H1 (cell line): ENCODE measurements at regions of chr19 and their contacts with region 1.

Region 1: GRCh38 chr19:588093-588740 is 1.5 kb upstream of the HCN2 start:
- DNase-seq: peak; percentile 61 to 90
- H3K4me3 ChIP-seq: peak overlapping the region in 1 of 4 experiments; percentile 29; a peak in 1 of 8 replicates
- H3K27ac ChIP-seq: no peak overlapping the region
- H3K4me1 ChIP-seq: peaks cover 0 to 10% (median 3%) of the 10 kb centered on the region in 4 experiments; a peak in 5 of 7 replicates
- H3K27me3 ChIP-seq: peaks cover 23 to 39% (median 31%) of the 10 kb centered on the region in 4 experiments
- CTCF ChIP-seq: peak; percentile 75 to 88 (median 75)
- EP300 ChIP-seq: no peak
- POLR2A ChIP-seq: no peak
- RAD21 ChIP-seq: peak; percentile 32 to 61

Region 2: DNA sequence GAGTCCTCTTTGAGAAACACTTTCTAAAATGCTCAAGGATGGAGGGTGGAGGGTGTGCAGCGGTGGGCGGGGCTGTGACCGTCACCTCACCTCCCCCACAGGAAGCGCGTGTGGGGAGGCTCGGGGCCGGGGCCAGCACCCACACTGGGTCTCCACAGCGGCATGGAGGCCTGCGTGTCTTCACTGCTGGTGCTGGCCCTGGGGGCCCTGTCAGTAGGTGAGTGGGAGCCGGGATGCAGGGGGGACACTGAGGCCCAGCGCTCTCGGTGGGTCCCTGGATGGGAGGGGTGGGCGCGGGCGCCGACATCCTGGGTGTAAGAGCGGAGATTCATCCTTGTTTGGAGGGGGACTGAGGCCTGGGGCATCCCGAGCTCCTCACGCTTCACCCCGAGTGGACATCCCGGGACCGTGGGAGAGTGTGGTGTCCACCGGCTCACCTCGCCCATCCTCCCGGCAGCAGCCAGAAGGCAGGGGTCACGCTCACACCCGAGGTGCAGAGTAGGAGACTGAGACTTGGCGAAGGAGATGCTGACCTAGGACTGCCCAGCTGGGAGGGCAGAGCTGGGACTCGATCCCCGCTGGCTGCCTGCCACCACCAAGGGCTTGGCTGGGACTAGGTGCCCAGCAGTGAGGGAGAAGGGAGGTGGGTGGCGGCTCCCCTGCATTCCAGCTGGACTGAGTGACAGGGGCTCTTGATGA is 44.2 kb before region 1 on chr19 and contains the start of gene GZMM:
- CTCF ChIA-PET with region 1: interaction called, 4 read pairs
- POLR2A ChIA-PET with region 1: interaction called, 17 read pairs
- DNase-seq: no peak
- H3K4me3 ChIP-seq: no peak within 1 kb of the TSS
- H3K27ac ChIP-seq: no peak within 1 kb of the TSS
- H3K4me1 ChIP-seq: no peaks in the 10 kb centered on the region; a peak in 1 of 7 replicates
- H3K27me3 ChIP-seq: no peaks in the 10 kb centered on the region
- CTCF ChIP-seq: no peak
- EP300 ChIP-seq: no peak
- POLR2A ChIP-seq: 0 out of 3 replicates have a peak, but pooled peaks of 1 of the 2 experiments have one; percentile 15
- RAD21 ChIP-seq: no peak
- total RNA-seq, gene GZMM: 0.32 and 0.59 TPM in 2 replicates

Region 3: GRCh38 chr19:607301-608154 is 19.3 kb after region 1 on chr19:
- CTCF ChIA-PET with region 1: interaction called, 12 read pairs
- POLR2A ChIA-PET with region 1: interaction called, 4 read pairs
- DNase-seq: no peak
- H3K4me3 ChIP-seq: no peak overlapping the region
- H3K27ac ChIP-seq: no peak overlapping the region
- H3K4me1 ChIP-seq: no peaks in the 10 kb centered on the region
- H3K27me3 ChIP-seq: no peaks in the 10 kb centered on the region
- CTCF ChIP-seq: no peak
- EP300 ChIP-seq: no peak
- POLR2A ChIP-seq: no peak
- RAD21 ChIP-seq: no peak

Region 4: DNA sequence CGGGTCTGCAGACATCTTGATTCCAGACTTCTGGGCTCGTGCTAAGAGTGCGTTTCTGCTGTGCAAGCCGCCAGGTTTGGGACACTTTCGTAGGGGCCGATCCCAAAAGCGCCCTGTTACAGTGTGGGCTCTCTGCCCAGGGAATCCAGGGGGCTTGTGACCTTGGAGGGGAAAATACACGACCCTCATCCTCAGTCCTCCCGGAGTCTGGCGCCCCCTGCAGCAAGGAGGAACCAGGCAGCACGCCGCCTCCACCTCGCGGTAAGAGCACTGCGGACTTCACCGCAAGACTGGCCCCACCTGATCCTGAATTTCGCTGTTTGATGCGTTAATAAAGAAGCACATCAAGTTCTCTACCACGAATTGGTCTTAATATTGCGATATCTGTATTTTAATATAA is 39.9 kb after region 1 on chr19:
- CTCF ChIA-PET with region 1: interaction called, 26 read pairs
- POLR2A ChIA-PET with region 1: interaction called, 5 read pairs
- DNase-seq: peak; percentile 33 to 84
- H3K4me3 ChIP-seq: no peak overlapping the region
- H3K27ac ChIP-seq: no peak overlapping the region
- H3K4me1 ChIP-seq: peaks cover 0 to 3% (median 1%) of the 10 kb centered on the region in 4 experiments; a peak in 3 of 7 replicates
- H3K27me3 ChIP-seq: no peaks in the 10 kb centered on the region
- CTCF ChIP-seq: peak; percentile 86 to 96 (median 86)
- EP300 ChIP-seq: no peak
- POLR2A ChIP-seq: no peak
- RAD21 ChIP-seq: peak; percentile 50 to 63; a peak in 3 of 4 replicates

Region 5: DNA sequence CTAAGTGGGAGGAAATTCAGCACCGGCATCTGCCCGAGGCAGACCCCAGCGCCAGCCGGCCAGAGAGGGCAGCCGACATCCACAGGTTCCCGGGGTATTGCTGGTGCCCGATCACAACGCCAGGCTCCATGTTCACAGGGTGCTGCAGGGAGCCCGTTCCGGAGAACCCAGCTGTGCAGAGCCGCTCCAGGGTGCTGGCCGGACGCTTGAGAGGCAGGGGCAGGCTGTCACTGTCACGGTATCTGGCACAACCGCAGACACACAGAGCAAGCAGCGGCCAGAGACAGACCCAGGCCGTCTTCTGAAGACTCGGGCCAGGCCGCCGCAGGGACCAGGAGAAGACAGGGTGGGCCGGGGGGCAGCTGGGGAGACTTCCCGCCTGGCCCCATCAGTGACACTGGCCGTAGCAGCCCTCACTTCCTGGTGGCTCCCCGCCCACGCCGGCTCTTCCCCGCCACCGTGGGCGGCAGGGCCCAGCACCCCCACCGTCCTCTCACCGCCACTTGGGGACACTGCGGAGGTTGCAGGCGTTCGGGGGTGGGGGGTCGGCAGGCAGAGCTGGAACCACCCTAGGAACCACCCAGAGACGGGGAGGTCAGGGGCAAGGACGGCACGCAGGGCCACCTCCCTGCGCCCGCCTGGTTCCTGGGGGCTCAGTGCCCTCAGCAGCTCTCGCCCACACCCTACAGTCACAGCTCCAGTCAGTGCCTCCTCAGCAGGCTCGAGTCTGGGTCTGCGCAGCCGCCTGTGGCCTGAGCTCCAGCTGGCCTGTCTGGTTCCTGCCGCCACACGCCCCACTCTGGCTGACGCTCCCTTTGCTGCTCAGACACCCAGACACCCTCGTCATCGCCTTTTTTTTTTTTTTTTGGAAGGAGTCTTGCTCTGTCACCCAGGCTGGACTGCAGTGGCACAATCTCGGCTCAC is 71.0 kb after region 1 on chr19:
- CTCF ChIA-PET with region 1: no interaction called
- POLR2A ChIA-PET with region 1: no interaction called
- DNase-seq: no peak
- H3K4me3 ChIP-seq: no peak overlapping the region
- H3K27ac ChIP-seq: no peak overlapping the region
- H3K4me1 ChIP-seq: peaks cover 0 to 11% (median 5%) of the 10 kb centered on the region in 4 experiments; a peak in 5 of 7 replicates
- H3K27me3 ChIP-seq: no peaks in the 10 kb centered on the region
- CTCF ChIP-seq: no peak
- EP300 ChIP-seq: no peak
- POLR2A ChIP-seq: no peak
- RAD21 ChIP-seq: no peak